Naive thymus-derived CD4-positive, alpha-beta T cell (primary cell): ENCODE measurements at regions of chr11 and their contacts with region 1.

Region 1: GRCh38 chr11:5684646-5685362 is at the start of gene TRIM5:
- DNase-seq: peak; percentile 37 to 86 (median 83)
- ATAC-seq: peak; percentile 90
- H3K4me3 ChIP-seq: peak within 1 kb of the TSS; percentile 90
- H3K4me3 Mint-ChIP-seq: peak within 1 kb of the TSS; percentile 81 to 99 (median 94)
- H3K27ac ChIP-seq: peak within 1 kb of the TSS; percentile 76
- H3K27ac Mint-ChIP-seq: peak within 1 kb of the TSS; percentile 90 to 98 (median 95)
- H3K4me1 ChIP-seq: peaks cover 9 to 23% of the 10 kb centered on the region in 2 donors
- H3K4me1 Mint-ChIP-seq: peaks cover 28 to 83% (median 66%) of the 10 kb centered on the region in 7 donors
- H3K27me3 ChIP-seq: no peaks in the 10 kb centered on the region
- H3K27me3 Mint-ChIP-seq: no peaks in the 10 kb centered on the region
- total RNA-seq, gene TRIM5: 16.9 to 36.8 (median 26.2) TPM

Region 2: DNA sequence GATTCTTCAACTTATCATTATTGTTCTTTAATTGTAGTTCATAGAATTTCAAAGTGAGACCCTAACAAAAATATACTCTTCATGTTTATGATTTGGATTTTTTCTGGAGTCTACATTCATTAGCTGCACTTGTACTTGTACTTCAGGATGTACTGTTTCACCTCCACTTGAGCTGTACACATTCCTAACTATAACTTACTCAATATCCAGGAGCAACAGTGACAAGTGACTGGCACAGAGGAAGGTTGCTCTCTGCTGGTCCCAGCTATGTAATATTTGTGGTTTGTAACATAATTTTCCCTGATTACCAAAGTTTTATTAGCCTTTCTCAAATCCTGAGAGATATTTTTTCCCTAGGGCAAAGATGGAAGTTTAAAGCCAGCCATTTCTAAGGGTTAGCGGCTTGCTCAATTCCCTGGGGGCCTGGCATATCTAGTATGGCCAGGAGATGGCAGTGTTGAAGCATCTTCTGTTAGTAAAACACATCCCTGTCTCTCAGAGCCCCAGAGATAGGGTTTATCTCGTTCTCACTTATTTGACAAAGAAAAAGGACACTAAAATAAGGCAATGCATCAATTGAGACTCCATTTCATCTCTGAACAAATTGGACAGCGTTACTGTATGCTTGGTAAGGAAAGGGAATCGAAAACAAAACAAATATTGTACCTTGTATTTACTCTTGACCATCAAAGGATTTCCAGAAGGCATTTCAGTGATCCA is 560.8 kb before region 1 on chr11:
- CTCF ChIA-PET with region 1: no interaction called
- POLR2A ChIA-PET with region 1: no interaction called
- intact Hi-C with region 1: loop called in 1 of 2 experiments (anchors 10 kb)
- DNase-seq: peak in 8 of 9 donors; percentile 8 to 46 (median 28)
- ATAC-seq: peak; percentile 67
- H3K4me3 ChIP-seq: no peak overlapping the region
- H3K4me3 Mint-ChIP-seq: no peak overlapping the region
- H3K27ac ChIP-seq: no peak overlapping the region
- H3K27ac Mint-ChIP-seq: no peak overlapping the region
- H3K4me1 ChIP-seq: no peaks in the 10 kb centered on the region
- H3K4me1 Mint-ChIP-seq: peaks cover 0 to 2% (median 0%) of the 10 kb centered on the region in 7 donors
- H3K27me3 ChIP-seq: no peaks in the 10 kb centered on the region
- H3K27me3 Mint-ChIP-seq: peaks cover 9 to 24% (median 16%) of the 10 kb centered on the region in 5 donors

Region 3: GRCh38 chr11:5591613-5592012 is 93.2 kb before region 1 on chr11:
- CTCF ChIA-PET with region 1: no interaction called
- POLR2A ChIA-PET with region 1: no interaction called
- intact Hi-C with region 1: no loop called
- DNase-seq: no peak
- ATAC-seq: no peak
- H3K4me3 ChIP-seq: no peak overlapping the region
- H3K4me3 Mint-ChIP-seq: no peak overlapping the region
- H3K27ac ChIP-seq: no peak overlapping the region
- H3K27ac Mint-ChIP-seq: peak overlapping the region in 1 of 9 donors; percentile 41
- H3K4me1 ChIP-seq: no peaks in the 10 kb centered on the region
- H3K4me1 Mint-ChIP-seq: peaks cover under 1 to 9% (median 5%) of the 10 kb centered on the region in 7 donors
- H3K27me3 ChIP-seq: no peaks in the 10 kb centered on the region
- H3K27me3 Mint-ChIP-seq: peaks cover 0 to 5% (median 1%) of the 10 kb centered on the region in 5 donors

Region 4: DNA sequence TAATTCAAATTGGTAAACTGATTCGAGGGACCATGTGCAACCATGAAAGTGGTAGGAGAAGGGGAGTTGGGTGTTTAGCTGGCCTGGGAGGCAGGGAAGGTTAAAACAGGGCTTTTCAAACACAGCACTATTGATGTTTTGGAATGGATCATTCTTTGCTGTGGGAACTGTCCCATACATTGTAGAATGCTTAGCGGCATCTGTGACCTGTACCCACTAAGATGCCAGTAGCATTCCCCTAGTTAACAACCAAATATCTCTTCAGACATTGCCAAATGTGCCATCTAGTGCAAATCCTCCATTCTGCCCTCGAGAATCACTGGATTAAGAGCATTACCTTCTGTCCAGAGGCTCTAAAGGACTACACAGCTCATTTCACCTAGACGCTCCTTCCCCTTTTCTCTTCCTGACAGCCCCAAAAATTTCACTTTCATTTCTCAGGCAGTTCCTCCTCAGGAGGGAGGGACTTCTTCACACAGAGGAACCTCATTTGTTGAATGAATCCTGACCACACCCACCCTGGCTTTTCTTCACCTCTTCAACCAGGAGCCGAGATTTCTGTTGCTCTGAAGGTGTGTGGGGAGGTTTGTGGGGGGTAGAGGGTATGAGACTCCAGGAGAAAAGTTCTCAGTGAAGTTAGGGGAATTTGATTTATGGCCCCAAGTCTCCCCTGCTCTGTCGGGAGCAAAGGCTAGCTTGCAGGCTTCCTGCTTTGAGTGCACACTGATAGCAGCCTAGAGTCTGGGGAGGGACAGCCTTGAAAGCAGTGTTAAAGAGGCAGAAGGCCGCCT is 60.1 kb before region 1 on chr11 and contains the start of gene TRIM34:
- CTCF ChIA-PET with region 1: interaction called, 3 read pairs
- POLR2A ChIA-PET with region 1: interaction called, 4 read pairs
- intact Hi-C with region 1: loop called (anchors 1 kb)
- DNase-seq: peak; percentile 15 to 79 (median 74)
- ATAC-seq: peak; percentile 98
- H3K4me3 ChIP-seq: peak within 1 kb of the TSS; percentile 73
- H3K4me3 Mint-ChIP-seq: peak within 1 kb of the TSS; percentile 81 to 96 (median 91)
- H3K27ac ChIP-seq: peak within 1 kb of the TSS; percentile 84
- H3K27ac Mint-ChIP-seq: peak within 1 kb of the TSS; percentile 90 to 96 (median 95)
- H3K4me1 ChIP-seq: peaks cover 17 to 18% of the 10 kb centered on the region in 2 donors
- H3K4me1 Mint-ChIP-seq: peaks cover 33 to 55% (median 51%) of the 10 kb centered on the region in 7 donors
- H3K27me3 ChIP-seq: no peaks in the 10 kb centered on the region
- H3K27me3 Mint-ChIP-seq: no peaks in the 10 kb centered on the region
- total RNA-seq, gene TRIM34: 5.8 to 14.2 (median 10.8) TPM

Region 5: DNA sequence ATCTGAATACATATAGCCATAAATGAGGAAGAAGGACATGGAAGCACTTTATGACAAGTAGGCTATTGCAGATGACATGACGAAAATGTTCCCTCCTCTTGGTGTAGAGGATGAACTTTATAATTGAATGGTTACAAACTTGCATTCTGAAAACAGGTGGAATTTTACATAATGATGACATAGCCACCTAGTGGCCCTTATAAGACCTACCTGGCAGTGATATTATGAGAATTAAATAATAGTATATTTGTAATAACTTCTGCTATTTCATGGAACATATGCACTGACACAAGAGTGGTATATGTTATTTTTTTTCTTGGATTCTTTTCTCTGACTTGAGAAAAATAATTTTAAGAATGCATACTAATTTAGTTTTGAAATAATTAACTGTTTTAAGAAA is 27.7 kb after region 1 on chr11:
- CTCF ChIA-PET with region 1: interaction called, 13 read pairs
- POLR2A ChIA-PET with region 1: interaction called, 22 read pairs
- intact Hi-C with region 1: loop called (anchors 1 kb)
- DNase-seq: peak in 3 of 9 donors; percentile 8 to 33 (median 22)
- ATAC-seq: peak; percentile 42
- H3K4me3 ChIP-seq: no peak overlapping the region
- H3K4me3 Mint-ChIP-seq: no peak overlapping the region
- H3K27ac ChIP-seq: no peak overlapping the region
- H3K27ac Mint-ChIP-seq: peak overlapping the region in 7 of 9 donors; percentile 6 to 83 (median 19)
- H3K4me1 ChIP-seq: no peaks in the 10 kb centered on the region
- H3K4me1 Mint-ChIP-seq: peaks cover 0 to 13% (median 4%) of the 10 kb centered on the region in 7 donors
- H3K27me3 ChIP-seq: no peaks in the 10 kb centered on the region
- H3K27me3 Mint-ChIP-seq: no peaks in the 10 kb centered on the region

Region 6: GRCh38 chr11:5891216-5891800 is 206.5 kb after region 1 on chr11:
- CTCF ChIA-PET with region 1: interaction called, 3 read pairs
- POLR2A ChIA-PET with region 1: no interaction called
- intact Hi-C with region 1: loop called in 1 of 2 experiments (anchors 5 kb)
- DNase-seq: peak in 3 of 9 donors; percentile 0 to 10 (median 1)
- ATAC-seq: no peak
- H3K4me3 ChIP-seq: no peak overlapping the region
- H3K4me3 Mint-ChIP-seq: no peak overlapping the region
- H3K27ac ChIP-seq: no peak overlapping the region
- H3K27ac Mint-ChIP-seq: no peak overlapping the region
- H3K4me1 ChIP-seq: no peaks in the 10 kb centered on the region
- H3K4me1 Mint-ChIP-seq: no peaks in the 10 kb centered on the region
- H3K27me3 ChIP-seq: peaks cover 5% of the 10 kb centered on the region in 2 donors
- H3K27me3 Mint-ChIP-seq: peaks cover 7 to 27% (median 20%) of the 10 kb centered on the region in 5 donors

Region 7: GRCh38 chr11:5910540-5910939 is 225.7 kb after region 1 on chr11:
- CTCF ChIA-PET with region 1: no interaction called
- POLR2A ChIA-PET with region 1: no interaction called
- intact Hi-C with region 1: no loop called
- DNase-seq: no peak
- ATAC-seq: no peak
- H3K4me3 ChIP-seq: no peak overlapping the region
- H3K4me3 Mint-ChIP-seq: no peak overlapping the region
- H3K27ac ChIP-seq: no peak overlapping the region
- H3K27ac Mint-ChIP-seq: no peak overlapping the region
- H3K4me1 ChIP-seq: no peaks in the 10 kb centered on the region
- H3K4me1 Mint-ChIP-seq: no peaks in the 10 kb centered on the region
- H3K27me3 ChIP-seq: no peaks in the 10 kb centered on the region
- H3K27me3 Mint-ChIP-seq: peaks cover 0 to 54% (median 47%) of the 10 kb centered on the region in 5 donors

Region 8: DNA sequence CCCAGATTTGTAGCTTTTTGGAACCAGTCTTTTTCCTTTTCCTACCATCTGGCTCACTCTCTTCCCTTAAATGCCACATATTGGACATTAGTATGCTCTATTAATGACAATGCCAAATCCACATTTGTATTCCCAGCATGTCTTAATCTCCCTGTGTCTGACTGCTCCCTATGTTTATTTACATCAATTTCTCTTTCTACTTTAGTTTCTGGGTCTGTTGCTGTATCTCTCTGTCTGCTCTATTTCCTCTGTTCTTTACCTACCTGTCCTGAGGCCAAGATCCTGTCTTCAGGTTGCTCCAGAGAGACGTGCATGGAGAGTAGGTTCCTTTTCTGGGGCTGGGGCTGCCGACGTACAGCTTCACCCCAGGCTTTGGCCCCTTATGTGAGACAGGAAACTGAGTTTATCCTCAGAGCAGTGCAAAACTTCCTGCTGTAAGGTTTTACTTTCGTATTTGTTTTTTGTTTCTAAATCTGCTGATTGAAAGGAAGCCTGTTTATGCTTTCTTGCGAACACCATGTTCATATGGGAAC is 1061.3 kb after region 1 on chr11:
- CTCF ChIA-PET with region 1: no interaction called
- POLR2A ChIA-PET with region 1: no interaction called
- intact Hi-C with region 1: loop called (anchors 5 to 10 kb)
- DNase-seq: peak in 8 of 9 donors; percentile 32 to 66 (median 64)
- ATAC-seq: peak; percentile 89
- H3K4me3 ChIP-seq: peak overlapping the region; percentile 80
- H3K4me3 Mint-ChIP-seq: no peak overlapping the region
- H3K27ac ChIP-seq: peak overlapping the region; percentile 85
- H3K27ac Mint-ChIP-seq: no peak overlapping the region
- H3K4me1 ChIP-seq: peaks cover 18 to 37% of the 10 kb centered on the region in 2 donors
- H3K4me1 Mint-ChIP-seq: peaks cover 26 to 48% (median 29%) of the 10 kb centered on the region in 7 donors
- H3K27me3 ChIP-seq: no peaks in the 10 kb centered on the region
- H3K27me3 Mint-ChIP-seq: no peaks in the 10 kb centered on the region